ENCODE measurements at regions of chr3 and their contacts with region 1.

Region 1: GRCh38 chr3:169966428-169966950 is at the start of gene SEC62:
- DNase-seq: peak; percentile 85 to 97 (median 93)
- ATAC-seq: peak; percentile 92 to 95 (median 93)
- H3K4me3 ChIP-seq: peak within 1 kb of the TSS; percentile 83 to 98
- H3K4me3 Mint-ChIP-seq: peak within 1 kb of the TSS; percentile 93 to 98 (median 95)
- H3K27ac ChIP-seq: peak within 1 kb of the TSS; percentile 96
- H3K27ac Mint-ChIP-seq: peak within 1 kb of the TSS; percentile 97 to 98
- H3K4me1 ChIP-seq: peaks cover 22 to 24% of the 10 kb centered on the region in 2 experiments
- H3K4me1 Mint-ChIP-seq: peaks cover 60 to 74% (median 70%) of the 10 kb centered on the region in 3 donors
- H3K27me3 ChIP-seq: no peaks in the 10 kb centered on the region
- H3K27me3 Mint-ChIP-seq: no peaks in the 10 kb centered on the region
- total RNA-seq, gene SEC62: 95.0 to 99.9 (median 97.2) TPM

Region 2: GRCh38 chr3:169863458-169863899 is 103.0 kb before region 1 on chr3:
- CTCF ChIA-PET with region 1: interaction called, 8 to 13 read pairs
- POLR2A ChIA-PET with region 1: interaction called in 1 of 2 experiments, 3 read pairs
- DNase-seq: peak; percentile 7 to 86 (median 42)
- ATAC-seq: peak; percentile 56 to 75 (median 60)
- H3K4me3 ChIP-seq: no peak overlapping the region
- H3K4me3 Mint-ChIP-seq: peak overlapping the region in 1 of 3 donors; percentile 47
- H3K27ac ChIP-seq: no peak overlapping the region
- H3K27ac Mint-ChIP-seq: peak overlapping the region in 1 of 2 donors; percentile 22
- H3K4me1 ChIP-seq: peaks cover 17 to 26% of the 10 kb centered on the region in 2 experiments
- H3K4me1 Mint-ChIP-seq: peaks cover 24 to 29% (median 25%) of the 10 kb centered on the region in 3 donors
- H3K27me3 ChIP-seq: peaks cover 0 to 4% of the 10 kb centered on the region in 2 experiments
- H3K27me3 Mint-ChIP-seq: peaks cover 0 to 4% of the 10 kb centered on the region in 2 donors

Region 3: GRCh38 chr3:169980055-169980454 is 13.6 kb after region 1 on chr3:
- CTCF ChIA-PET with region 1: interaction called, 3 read pairs
- POLR2A ChIA-PET with region 1: interaction called, 4 to 17 read pairs
- DNase-seq: no peak
- ATAC-seq: no peak
- H3K4me3 ChIP-seq: no peak overlapping the region
- H3K4me3 Mint-ChIP-seq: no peak overlapping the region
- H3K27ac ChIP-seq: no peak overlapping the region
- H3K27ac Mint-ChIP-seq: no peak overlapping the region
- H3K4me1 ChIP-seq: peaks cover 0 to 2% of the 10 kb centered on the region in 2 experiments
- H3K4me1 Mint-ChIP-seq: peaks cover 4 to 21% (median 11%) of the 10 kb centered on the region in 3 donors
- H3K27me3 ChIP-seq: no peaks in the 10 kb centered on the region
- H3K27me3 Mint-ChIP-seq: no peaks in the 10 kb centered on the region

Region 4: DNA sequence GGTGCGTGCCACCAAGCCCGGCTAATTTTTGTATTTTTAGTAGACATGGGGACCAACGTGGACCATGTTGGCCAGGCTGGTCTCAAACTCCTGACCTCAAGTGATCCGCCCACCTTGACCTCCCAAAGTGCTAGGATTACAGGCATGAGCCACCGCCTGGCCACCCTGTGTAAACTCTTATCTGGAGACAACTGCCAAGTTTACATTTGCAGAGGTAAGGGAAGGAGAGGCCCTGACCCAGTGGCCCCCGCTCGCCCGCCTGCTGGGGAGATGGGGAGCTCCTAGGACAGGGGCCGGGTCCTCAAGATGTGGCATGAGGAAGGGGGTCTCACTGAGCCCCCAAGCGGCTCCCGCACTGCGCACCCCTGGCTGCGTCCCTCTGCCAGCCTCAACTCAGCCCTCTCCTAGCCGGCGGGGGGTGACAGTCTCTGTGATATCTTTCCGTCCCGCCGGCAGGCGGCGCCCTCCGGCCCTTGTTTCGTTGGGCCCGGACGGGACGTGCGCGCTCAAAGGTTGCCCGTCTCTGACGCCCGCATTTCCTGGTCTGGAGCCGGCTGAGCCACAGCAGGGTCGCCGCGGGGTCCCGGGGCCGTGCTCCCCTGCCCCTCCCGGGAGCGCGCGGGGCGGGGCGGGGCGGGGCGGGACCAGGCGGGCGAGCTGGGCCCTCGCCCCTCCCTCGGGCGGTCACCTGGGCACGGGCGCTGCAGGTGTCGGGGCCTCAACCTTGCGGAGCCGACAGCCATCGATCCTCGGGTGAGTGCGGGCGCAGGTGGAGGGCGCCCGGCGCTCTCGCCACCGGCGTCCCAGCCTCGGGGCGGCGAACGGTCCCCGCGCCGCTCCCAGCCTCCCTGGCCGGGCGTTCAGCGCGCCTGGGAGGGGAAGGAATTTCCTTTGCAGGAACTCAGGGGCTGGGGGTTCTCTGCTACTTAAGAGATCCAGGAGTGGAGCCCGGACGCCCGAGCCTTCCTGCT is 71.3 kb after region 1 on chr3 and contains the start of gene GPR160:
- CTCF ChIA-PET with region 1: interaction called in 1 of 2 experiments, 3 read pairs
- POLR2A ChIA-PET with region 1: interaction called, 3 to 13 read pairs
- DNase-seq: peak; percentile 54 to 83 (median 74)
- ATAC-seq: peak; percentile 75
- H3K4me3 ChIP-seq: peak within 1 kb of the TSS; percentile 59 to 79
- H3K4me3 Mint-ChIP-seq: peak within 1 kb of the TSS; percentile 85 to 87 (median 86)
- H3K27ac ChIP-seq: no peak within 1 kb of the TSS
- H3K27ac Mint-ChIP-seq: peak within 1 kb of the TSS in 1 of 2 donors; percentile 70
- H3K4me1 ChIP-seq: peaks cover 19 to 33% of the 10 kb centered on the region in 2 experiments
- H3K4me1 Mint-ChIP-seq: peaks cover 21 to 36% (median 31%) of the 10 kb centered on the region in 3 donors
- H3K27me3 ChIP-seq: peaks cover 0 to 3% of the 10 kb centered on the region in 2 experiments
- H3K27me3 Mint-ChIP-seq: no peaks in the 10 kb centered on the region
- total RNA-seq, gene GPR160: 4.3 to 8.4 (median 5.9) TPM